ENCODE measurements at regions of chr12 and their contacts with region 1.

Region 1: GRCh38 chr12:115752913-115753726 is 524.4 kb downstream of the MED13L start:
- DNase-seq: peak; percentile 63
- H3K4me3 ChIP-seq: no peak overlapping the region
- H3K4me1 ChIP-seq: peaks cover 5% of the 10 kb centered on the region; the same call in 1 of the 2 replicates
- H3K27me3 ChIP-seq: peaks cover 25% of the 10 kb centered on the region

Region 2: DNA sequence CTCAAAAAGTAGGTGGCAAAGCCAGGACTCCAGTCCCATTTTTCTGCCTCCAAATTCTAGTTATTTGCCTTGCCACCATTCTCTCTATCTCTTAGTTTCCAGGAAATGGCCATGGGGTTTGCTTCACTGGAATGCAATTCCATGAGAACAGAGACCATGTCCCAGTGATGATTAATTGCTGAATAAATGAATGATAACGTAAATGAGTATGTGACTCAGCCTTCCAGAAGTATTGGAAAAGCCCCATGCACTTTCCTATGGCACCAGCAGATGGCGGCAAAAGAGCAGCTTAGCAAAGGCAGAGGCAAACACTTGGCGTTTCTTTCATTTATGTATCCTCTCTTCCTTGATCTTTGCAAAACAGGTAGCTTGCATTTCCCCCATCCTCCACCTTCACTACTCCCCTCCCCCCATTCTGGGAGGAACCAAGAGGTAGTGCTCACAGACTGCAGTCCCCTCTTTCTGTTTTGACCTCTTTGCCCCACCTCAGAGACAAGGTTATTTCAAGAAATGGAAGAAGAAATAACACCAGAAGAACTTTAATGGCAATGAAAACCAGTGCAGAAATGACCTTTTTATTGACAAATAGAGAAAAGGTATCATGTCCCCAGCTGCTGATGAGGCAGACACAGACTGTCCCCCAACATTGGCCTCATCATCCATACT is 1090.5 kb before region 1 on chr12:
- in situ Hi-C with region 1: loop called (anchors 10 kb)
- DNase-seq: peak; percentile 66 to 86
- H3K4me3 ChIP-seq: no peak overlapping the region
- H3K4me1 ChIP-seq: peaks cover 6% of the 10 kb centered on the region
- H3K27me3 ChIP-seq: no peaks in the 10 kb centered on the region

Measured in HAP-1 (cell line).